ENCODE measurements at regions of chr1 and their contacts with region 1.

Region 1: DNA sequence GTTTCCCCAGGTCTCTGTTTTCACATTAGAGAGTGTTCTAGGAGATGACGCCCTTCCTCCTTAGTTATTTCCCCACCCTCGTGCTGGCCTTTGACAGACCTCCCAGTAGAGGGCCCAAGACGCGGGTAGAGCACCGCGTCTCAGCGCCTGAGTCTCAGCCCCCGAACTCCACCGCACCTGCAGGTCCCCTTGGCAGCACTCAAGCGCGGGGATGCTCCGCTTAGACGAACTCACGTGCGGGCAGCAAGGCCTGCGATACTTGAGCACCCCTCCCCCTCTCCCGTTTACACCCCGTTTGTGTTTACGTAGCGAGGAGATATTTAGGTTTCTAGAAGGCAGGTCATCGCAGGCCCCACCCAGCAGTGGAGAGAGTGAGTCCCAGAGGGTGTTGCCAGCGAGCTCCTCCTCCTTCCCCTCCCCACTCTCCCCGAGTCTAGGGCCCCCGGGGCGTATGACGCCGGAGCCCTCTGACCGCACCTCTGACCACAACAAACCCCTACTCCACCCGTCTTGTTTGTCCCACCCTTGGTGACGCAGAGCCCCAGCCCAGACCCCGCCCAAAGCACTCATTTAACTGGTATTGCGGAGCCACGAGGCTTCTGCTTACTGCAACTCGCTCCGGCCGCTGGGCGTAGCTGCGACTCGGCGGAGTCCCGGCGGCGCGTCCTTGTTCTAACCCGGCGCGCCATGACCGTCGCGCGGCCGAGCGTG is at the start of gene CD55:
- DNase-seq: peak; percentile 98
- H3K4me3 ChIP-seq: peak within 1 kb of the TSS; percentile 74 to 94 (median 87)
- H3K27ac ChIP-seq: peak within 1 kb of the TSS; percentile 92
- H3K4me1 ChIP-seq: peaks cover 17% of the 10 kb centered on the region
- H3K27me3 ChIP-seq: no peaks in the 10 kb centered on the region
- CTCF ChIP-seq: peak; percentile 35 to 43
- POLR2A ChIP-seq: peak; percentile 77
- total RNA-seq, gene CD55: 179 and 223 TPM in 2 replicates

Region 2: GRCh38 chr1:207052911-207053769 is 268.1 kb before region 1 on chr1 and contains the start of gene PFKFB2:
- CTCF ChIA-PET with region 1: no interaction called
- POLR2A ChIA-PET with region 1: interaction called, 4 read pairs
- dilution Hi-C with region 1: no loop called
- intact Hi-C with region 1: loop called (anchors 2 kb)
- DNase-seq: peak; percentile 88
- H3K4me3 ChIP-seq: peak within 1 kb of the TSS; percentile 27 to 77 (median 62)
- H3K27ac ChIP-seq: no peak within 1 kb of the TSS
- H3K4me1 ChIP-seq: peaks cover 15% of the 10 kb centered on the region
- H3K27me3 ChIP-seq: peaks cover 0 to 2% of the 10 kb centered on the region in 2 experiments
- CTCF ChIP-seq: no peak
- POLR2A ChIP-seq: no peak
- total RNA-seq, gene PFKFB2: 1.8 and 2.0 TPM in 2 replicates

Region 3: GRCh38 chr1:207084701-207085180 is 236.5 kb before region 1 on chr1:
- CTCF ChIA-PET with region 1: interaction called, 4 read pairs
- POLR2A ChIA-PET with region 1: no interaction called
- dilution Hi-C with region 1: no loop called
- intact Hi-C with region 1: loop called (anchors 1 kb)
- DNase-seq: peak; percentile 75
- H3K4me3 ChIP-seq: no peak overlapping the region
- H3K27ac ChIP-seq: no peak overlapping the region
- H3K4me1 ChIP-seq: no peaks in the 10 kb centered on the region
- H3K27me3 ChIP-seq: peaks cover 2 to 3% of the 10 kb centered on the region in 2 experiments
- CTCF ChIP-seq: peak; percentile 39 to 63
- POLR2A ChIP-seq: no peak

Region 4: DNA sequence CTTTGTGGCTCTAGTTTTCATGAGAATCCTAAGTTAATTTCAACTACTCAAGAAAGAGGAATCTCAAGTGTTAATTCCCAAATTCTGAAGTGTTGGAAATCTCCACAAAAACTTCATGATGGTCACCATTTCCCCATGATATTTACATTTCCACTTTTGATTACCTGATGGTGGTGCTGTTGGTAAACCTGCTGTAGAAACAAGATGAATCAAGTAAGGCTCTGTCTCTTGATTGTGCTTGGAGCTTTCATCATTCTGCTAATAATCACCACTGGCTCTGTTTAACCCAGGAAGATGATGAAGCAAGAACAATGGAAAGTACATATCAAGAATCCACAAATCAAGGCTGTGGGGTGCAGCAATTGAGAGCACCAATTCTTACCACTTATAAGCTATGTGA is 139.4 kb before region 1 on chr1:
- CTCF ChIA-PET with region 1: no interaction called
- POLR2A ChIA-PET with region 1: no interaction called
- dilution Hi-C with region 1: no loop called
- intact Hi-C with region 1: loop called (anchors 1 kb)
- DNase-seq: peak; percentile 23
- H3K4me3 ChIP-seq: no peak overlapping the region
- H3K27ac ChIP-seq: no peak overlapping the region
- H3K4me1 ChIP-seq: no peaks in the 10 kb centered on the region
- H3K27me3 ChIP-seq: peaks cover 0 to 4% of the 10 kb centered on the region in 2 experiments
- CTCF ChIP-seq: peak in 1 of 2 donors; percentile 1
- POLR2A ChIP-seq: no peak

Region 5: DNA sequence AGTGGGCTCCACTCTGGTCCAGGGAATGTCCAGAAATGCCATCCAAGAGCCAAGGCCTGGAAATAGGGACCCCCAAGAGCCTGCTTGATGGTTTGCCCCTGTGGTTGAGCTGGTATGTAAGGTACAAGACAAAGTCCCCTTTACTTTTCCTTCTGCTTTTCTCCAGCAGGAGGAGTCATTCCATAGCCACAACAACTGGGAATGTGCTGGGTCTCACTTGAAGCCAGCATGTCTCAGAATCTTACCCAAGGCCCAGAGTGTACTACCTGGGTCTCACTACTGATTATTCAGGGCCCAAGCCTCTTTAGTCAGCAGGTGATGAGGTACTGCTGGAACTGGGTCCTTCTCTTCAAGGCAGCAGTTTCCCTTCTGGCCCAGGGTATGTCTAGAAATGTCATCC is 61.8 kb before region 1 on chr1:
- CTCF ChIA-PET with region 1: interaction called, 42 read pairs
- POLR2A ChIA-PET with region 1: interaction called, 6 read pairs
- dilution Hi-C with region 1: no loop called
- intact Hi-C with region 1: loop called (anchors 1 kb)
- DNase-seq: peak; percentile 78
- H3K4me3 ChIP-seq: no peak overlapping the region
- H3K27ac ChIP-seq: no peak overlapping the region
- H3K4me1 ChIP-seq: no peaks in the 10 kb centered on the region
- H3K27me3 ChIP-seq: no peaks in the 10 kb centered on the region
- CTCF ChIP-seq: peak; percentile 46 to 67
- POLR2A ChIP-seq: no peak

Region 6: GRCh38 chr1:207304710-207305151 is 16.5 kb before region 1 on chr1:
- CTCF ChIA-PET with region 1: interaction called, 14 read pairs
- POLR2A ChIA-PET with region 1: interaction called, 8 read pairs
- dilution Hi-C with region 1: no loop called
- intact Hi-C with region 1: loop called (anchors 1 kb)
- DNase-seq: peak; percentile 97
- H3K4me3 ChIP-seq: no peak overlapping the region
- H3K27ac ChIP-seq: peak overlapping the region; percentile 91
- H3K4me1 ChIP-seq: peaks cover 37% of the 10 kb centered on the region
- H3K27me3 ChIP-seq: no peaks in the 10 kb centered on the region
- CTCF ChIP-seq: no peak
- POLR2A ChIP-seq: no peak

Region 7: DNA sequence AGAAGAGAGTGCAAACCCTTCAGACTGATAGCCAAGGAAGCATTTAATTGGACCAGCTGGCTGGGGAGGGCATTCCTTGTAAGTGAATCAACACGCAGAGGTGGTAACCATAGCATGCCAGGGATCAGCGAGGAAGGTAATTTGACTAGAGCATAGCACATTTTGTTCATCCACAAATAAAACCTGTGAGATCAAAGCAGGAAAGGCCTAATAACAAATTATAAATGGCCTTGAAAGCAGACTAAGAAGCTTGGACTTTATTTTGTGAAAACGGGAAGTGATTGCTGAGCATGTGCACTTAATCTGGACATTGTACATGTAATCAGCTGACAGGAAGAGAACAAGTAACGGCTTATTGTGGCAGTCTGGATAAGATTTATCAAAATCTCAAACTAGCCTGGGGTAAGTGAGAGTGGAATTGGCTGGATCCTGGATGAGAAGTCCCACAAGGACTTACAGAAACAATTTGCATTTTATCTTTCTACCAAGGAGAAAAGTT is 11.4 kb before region 1 on chr1:
- CTCF ChIA-PET with region 1: interaction called, 14 read pairs
- POLR2A ChIA-PET with region 1: interaction called, 8 read pairs
- dilution Hi-C with region 1: no loop called
- intact Hi-C with region 1: loop called (anchors 1 kb)
- DNase-seq: peak; percentile 89
- H3K4me3 ChIP-seq: peak overlapping the region in 1 of 3 experiments; percentile 23
- H3K27ac ChIP-seq: peak overlapping the region; percentile 69
- H3K4me1 ChIP-seq: peaks cover 37% of the 10 kb centered on the region
- H3K27me3 ChIP-seq: no peaks in the 10 kb centered on the region
- CTCF ChIP-seq: no peak
- POLR2A ChIP-seq: no peak

Measured in endothelial cell of umbilical vein (primary cell).